Head of caudate nucleus (tissue), 42 donors: ENCODE measurements at regions of chr11 and their contacts with region 1.

Region 1: DNA sequence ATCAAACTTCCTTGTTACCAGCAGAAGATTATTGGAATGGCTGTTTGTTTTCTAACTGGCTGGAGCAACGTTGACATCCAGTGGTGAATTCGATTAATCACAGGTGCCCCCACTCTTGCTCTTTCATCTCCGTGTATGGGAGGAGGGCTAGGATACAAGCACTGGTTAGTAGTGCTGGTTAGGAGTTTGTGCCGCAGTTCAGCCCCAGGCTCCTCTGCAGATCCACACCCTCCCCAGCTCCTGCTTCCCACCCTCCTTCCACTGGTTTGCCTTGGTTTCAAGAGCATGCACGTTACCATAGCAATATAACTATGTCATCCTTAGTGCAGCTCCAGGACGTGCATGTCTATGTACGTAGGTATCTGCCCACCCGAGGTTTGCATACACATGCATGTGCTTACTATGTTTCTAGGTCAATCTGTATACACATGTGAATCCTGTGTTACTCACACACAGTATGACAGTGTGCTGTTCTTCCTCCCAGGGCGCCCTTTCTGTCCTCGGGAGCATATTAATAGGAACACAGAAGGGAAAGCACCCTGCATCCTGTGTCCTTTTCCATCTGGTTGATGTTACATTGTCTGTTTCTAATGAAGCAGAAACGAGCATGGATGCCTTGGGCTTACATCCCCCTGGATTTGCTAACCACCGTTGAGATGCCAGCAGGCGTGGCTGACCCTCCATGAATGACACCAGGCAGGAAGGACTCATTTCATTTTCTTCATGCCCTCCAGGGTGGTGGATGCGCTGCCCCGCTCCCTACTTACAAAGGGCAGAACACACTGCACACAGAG is 539.3 kb downstream of the OPCML start:
- DNase-seq: peak in 32 of 42 donors; percentile 14 to 74 (median 42)

Region 2: DNA sequence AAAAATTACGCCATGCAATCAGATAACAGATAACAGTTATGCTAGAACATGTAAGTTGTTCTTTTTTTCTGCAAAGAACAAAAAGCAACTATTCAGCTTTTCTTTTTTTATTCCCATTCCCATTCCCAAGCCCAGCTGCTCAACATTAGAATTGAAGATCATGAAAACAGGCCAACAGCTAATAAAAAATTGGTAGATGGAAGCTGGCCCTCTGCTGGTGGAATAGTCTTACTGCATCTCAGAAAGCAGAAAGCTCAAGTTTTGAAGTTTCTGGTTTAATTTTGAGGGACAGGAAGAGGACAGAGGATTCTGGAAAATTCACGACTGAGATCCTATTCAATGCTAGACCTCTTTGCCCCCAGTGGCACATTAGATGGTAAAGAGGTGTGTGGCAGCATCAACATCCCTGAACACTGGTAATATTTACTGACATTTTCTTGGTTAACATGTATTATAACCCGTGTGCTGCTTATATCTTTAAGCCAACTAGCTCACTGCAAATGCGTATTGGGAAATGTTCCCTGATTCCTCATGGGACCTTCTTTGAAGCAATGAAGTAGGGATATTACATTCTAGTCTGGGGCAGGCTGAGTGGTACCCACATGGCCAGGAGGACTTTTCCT is 51.9 kb before region 1 on chr11:
- intact Hi-C with region 1: loop called (anchors 5 kb)
- DNase-seq: peak in 28 of 42 donors; percentile 25 to 85 (median 62)

Region 3: DNA sequence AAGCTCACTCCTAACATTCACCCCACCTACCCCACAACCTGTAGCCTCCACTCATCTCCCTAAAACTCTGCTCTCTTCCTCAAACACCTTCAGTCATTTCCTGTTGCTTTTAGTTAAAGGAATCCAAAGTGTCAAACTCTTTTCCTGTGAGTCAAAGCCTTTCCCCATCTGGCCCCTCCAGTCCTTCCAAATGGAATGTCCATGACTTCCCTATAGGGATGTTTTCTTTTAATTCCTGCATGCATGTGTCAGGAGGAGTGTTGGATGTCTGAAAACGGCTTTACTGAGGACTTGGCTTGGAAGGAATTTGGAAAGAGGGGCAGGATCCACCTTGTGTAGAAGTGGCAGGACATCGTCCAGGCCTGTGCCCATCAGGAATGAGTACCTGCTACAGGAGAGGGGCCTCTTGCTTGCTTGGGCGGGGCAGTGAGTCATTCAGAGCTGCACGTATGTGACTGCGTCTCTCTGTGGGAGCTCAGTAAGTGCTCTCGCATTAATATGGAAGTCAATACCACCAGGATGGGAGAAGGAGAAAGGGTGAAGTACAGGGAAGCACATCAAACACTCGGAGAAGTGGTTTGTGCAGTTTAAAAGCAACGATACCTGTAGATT is 47.4 kb after region 1 on chr11:
- intact Hi-C with region 1: no loop called
- DNase-seq: peak in 4 of 42 donors; percentile 19 to 51 (median 30)

Region 4: GRCh38 chr11:133052537-133052936 is 59.5 kb after region 1 on chr11:
- intact Hi-C with region 1: no loop called
- DNase-seq: no peak